SK-N-SH (cell line): ENCODE measurements at regions of chr2 and their contacts with region 1.

Region 1: DNA sequence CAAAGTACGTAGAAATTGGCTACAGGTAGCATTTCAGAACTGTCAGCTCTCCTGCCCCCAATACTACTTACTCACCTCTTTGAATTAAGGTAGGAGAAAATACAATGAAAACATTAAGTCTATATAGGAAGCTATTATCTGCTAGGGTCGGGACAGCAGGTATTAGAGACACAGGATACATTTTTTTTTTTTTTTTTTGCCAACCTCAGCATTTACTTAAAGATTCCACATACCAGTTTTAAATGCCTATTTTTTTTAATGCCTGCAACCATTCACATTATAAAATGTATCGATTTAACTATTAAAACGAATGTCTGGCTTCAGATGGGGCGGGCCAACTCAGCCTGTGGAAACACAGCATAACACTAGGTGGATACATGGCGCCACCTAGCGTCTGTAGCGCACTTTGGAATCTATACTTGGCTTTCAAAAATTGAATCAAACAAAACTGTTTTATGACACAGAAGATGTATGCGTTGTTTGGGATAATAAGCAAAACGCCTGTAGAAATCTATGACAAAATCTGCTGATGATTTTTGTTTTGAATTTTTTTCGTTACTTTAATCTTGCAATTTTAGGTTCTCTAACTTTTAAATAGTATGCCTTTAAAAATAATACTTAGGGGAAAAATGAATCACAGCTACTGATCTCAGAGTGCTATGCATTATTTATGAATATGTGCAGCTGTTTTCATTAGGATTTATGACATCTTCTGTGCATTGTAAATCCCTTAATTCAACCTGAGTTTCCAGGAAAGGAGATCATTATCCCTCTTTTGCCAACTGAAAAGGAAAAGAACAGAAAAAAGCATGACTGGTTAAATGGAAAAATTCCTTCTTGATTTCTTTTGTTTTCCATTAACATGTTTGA is 261.0 kb downstream of the NYAP2 start:
- DNase-seq: peak; percentile 58
- H3K4me3 ChIP-seq: no peak overlapping the region; a peak in 1 of 4 replicates
- H3K27ac ChIP-seq: no peak overlapping the region
- H3K4me1 ChIP-seq: no peaks in the 10 kb centered on the region
- H3K27me3 ChIP-seq: no peaks in the 10 kb centered on the region
- CTCF ChIP-seq: peak; percentile 97
- EP300 ChIP-seq: no peak
- RAD21 ChIP-seq: peak; percentile 98

Region 2: GRCh38 chr2:225020168-225020849 is 640.2 kb before region 1 on chr2:
- CTCF ChIA-PET with region 1: interaction called, 10 read pairs
- POLR2A ChIA-PET with region 1: no interaction called
- DNase-seq: no peak
- H3K4me3 ChIP-seq: no peak overlapping the region
- H3K27ac ChIP-seq: peak overlapping the region in 1 of 2 experiments; percentile 37; a peak in 2 of 4 replicates
- H3K4me1 ChIP-seq: peaks cover 5 to 8% of the 10 kb centered on the region in 2 experiments; a peak in 3 of 4 replicates
- H3K27me3 ChIP-seq: no peaks in the 10 kb centered on the region
- CTCF ChIP-seq: no peak
- EP300 ChIP-seq: no peak
- RAD21 ChIP-seq: no peak

Region 3: GRCh38 chr2:225122583-225123486 is 537.7 kb before region 1 on chr2:
- CTCF ChIA-PET with region 1: interaction called, 109 read pairs
- POLR2A ChIA-PET with region 1: no interaction called
- DNase-seq: peak; percentile 26
- H3K4me3 ChIP-seq: no peak overlapping the region
- H3K27ac ChIP-seq: no peak overlapping the region
- H3K4me1 ChIP-seq: peaks cover 4 to 5% of the 10 kb centered on the region in 2 experiments; a peak in 3 of 4 replicates
- H3K27me3 ChIP-seq: no peaks in the 10 kb centered on the region
- CTCF ChIP-seq: peak; percentile 63
- EP300 ChIP-seq: no peak
- RAD21 ChIP-seq: peak; percentile 84

Region 4: DNA sequence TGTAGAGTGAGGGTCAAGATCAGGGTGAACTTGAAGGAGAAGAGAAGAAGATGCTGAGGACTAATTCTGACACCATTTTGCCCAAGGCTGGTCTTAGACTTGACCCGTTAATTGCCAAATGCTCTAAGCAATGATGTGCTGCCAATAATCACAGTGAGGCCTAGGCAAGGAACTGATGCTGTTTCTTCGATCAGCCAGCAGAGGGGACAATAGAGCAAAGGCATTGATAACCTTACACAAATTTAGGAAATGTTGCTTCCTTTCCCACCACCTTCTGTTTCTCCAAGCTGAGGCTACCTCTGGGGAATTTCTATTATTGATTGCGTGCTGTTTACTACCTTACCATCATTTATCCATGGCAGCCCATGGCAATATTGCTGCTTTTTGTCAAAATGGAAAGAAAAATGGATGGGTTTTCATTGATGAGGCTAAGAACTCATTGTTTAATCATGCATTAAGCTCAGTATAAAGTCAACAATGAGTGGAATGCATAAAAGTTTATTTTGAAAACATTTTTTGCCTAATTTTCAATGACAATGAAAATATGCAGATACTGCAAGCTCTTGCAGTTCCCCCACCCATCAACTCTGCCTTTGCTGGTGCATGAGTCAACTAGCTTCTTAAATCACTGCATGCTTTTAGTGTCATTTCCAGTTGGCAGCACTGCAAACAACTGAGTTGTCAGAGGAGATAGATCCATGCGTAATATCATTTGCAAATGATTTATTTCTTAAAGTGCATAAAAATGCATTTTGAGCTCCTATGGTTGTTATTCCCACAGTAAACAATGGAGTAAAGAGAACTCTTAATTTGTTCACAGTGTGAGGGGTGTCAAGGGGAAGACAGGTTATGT is 377.4 kb before region 1 on chr2:
- CTCF ChIA-PET with region 1: interaction called, 54 read pairs
- POLR2A ChIA-PET with region 1: no interaction called
- DNase-seq: peak; percentile 33
- H3K4me3 ChIP-seq: no peak overlapping the region; a peak in 1 of 4 replicates
- H3K27ac ChIP-seq: no peak overlapping the region
- H3K4me1 ChIP-seq: no peaks in the 10 kb centered on the region
- H3K27me3 ChIP-seq: no peaks in the 10 kb centered on the region
- CTCF ChIP-seq: peak; percentile 68
- EP300 ChIP-seq: no peak
- RAD21 ChIP-seq: peak; percentile 80

Region 5: GRCh38 chr2:225608136-225608535 is 52.4 kb before region 1 on chr2:
- CTCF ChIA-PET with region 1: no interaction called
- POLR2A ChIA-PET with region 1: no interaction called
- DNase-seq: no peak
- H3K4me3 ChIP-seq: no peak overlapping the region
- H3K27ac ChIP-seq: no peak overlapping the region
- H3K4me1 ChIP-seq: no peaks in the 10 kb centered on the region
- H3K27me3 ChIP-seq: no peaks in the 10 kb centered on the region
- CTCF ChIP-seq: no peak
- EP300 ChIP-seq: peak in 1 of 2 experiments; percentile 35; a peak in 1 of 4 replicates
- RAD21 ChIP-seq: no peak

Region 6: GRCh38 chr2:225649274-225649673 is 11.2 kb before region 1 on chr2:
- CTCF ChIA-PET with region 1: interaction called, 11 read pairs
- POLR2A ChIA-PET with region 1: no interaction called
- DNase-seq: no peak
- H3K4me3 ChIP-seq: no peak overlapping the region
- H3K27ac ChIP-seq: no peak overlapping the region
- H3K4me1 ChIP-seq: no peaks in the 10 kb centered on the region; a peak in 1 of 4 replicates
- H3K27me3 ChIP-seq: no peaks in the 10 kb centered on the region
- CTCF ChIP-seq: no peak
- EP300 ChIP-seq: no peak
- RAD21 ChIP-seq: peak; percentile 51